Activated CD4-positive, alpha-beta T cell treated with anti-CD3 and anti-CD28 coated beads, Interleukin-2, amount 10 ng/mL, durations not matched to agents 24 days and 14 days (primary cell): ENCODE measurements at regions of chr10 and their contacts with region 1.

Region 1: DNA sequence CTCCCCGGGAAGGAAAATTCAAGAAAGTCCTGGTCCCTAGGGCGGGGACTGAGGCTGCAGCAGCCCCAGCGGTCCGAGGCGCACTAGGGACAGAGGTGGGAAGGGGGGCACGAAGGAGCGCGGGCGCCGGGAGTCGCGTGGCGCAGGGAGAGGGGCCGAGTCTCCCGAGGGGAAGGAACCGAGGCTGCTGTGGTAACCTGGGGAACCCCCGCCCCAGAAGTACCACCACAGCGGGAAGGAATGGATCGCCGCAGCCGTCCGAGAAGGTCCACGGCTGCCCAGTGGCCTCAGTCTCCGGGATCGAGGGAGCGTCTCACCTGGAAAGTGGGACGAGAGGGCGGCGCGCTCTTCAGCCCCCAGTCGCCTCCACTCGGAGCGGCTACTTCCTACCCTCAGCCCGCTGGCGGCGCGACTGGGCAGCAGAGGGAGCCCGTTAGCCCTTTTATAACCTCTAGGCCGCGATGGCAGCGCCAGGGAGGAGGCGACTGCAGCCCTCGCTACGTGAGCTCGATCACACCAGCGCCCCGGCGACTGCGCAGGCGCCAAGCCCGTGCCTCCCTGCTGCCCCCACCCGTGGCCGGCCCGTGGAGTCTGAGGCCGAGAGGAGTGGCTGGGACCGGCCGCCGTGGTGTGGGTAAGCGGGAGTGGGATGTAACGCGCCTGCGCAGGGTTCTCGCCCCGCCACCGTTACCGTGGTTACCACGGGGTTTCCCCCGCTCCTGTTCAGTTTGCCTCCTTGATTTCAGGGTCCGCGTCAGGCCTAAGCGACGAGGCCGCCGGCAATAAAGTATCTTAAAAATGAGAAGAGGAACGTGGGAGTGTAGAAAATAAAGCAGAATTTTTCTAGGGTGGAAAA is at the start of gene P4HA1:
- DNase-seq: peak; percentile 99
- H3K4me3 Mint-ChIP-seq: peak within 1 kb of the TSS; percentile 93
- H3K27ac Mint-ChIP-seq: peak within 1 kb of the TSS; percentile 99
- H3K4me1 Mint-ChIP-seq: peaks cover 30% of the 10 kb centered on the region
- H3K27me3 Mint-ChIP-seq: no peaks in the 10 kb centered on the region
- total RNA-seq, gene P4HA1: 69.4 and 71.1 TPM in 2 replicates

Region 2: GRCh38 chr10:73060738-73061635 is 35.7 kb before region 1 on chr10:
- intact Hi-C with region 1: loop called (anchors 2 kb)
- DNase-seq: no peak
- H3K4me3 Mint-ChIP-seq: no peak overlapping the region
- H3K27ac Mint-ChIP-seq: peak overlapping the region; percentile 80
- H3K4me1 Mint-ChIP-seq: peaks cover 21% of the 10 kb centered on the region
- H3K27me3 Mint-ChIP-seq: no peaks in the 10 kb centered on the region

Region 3: DNA sequence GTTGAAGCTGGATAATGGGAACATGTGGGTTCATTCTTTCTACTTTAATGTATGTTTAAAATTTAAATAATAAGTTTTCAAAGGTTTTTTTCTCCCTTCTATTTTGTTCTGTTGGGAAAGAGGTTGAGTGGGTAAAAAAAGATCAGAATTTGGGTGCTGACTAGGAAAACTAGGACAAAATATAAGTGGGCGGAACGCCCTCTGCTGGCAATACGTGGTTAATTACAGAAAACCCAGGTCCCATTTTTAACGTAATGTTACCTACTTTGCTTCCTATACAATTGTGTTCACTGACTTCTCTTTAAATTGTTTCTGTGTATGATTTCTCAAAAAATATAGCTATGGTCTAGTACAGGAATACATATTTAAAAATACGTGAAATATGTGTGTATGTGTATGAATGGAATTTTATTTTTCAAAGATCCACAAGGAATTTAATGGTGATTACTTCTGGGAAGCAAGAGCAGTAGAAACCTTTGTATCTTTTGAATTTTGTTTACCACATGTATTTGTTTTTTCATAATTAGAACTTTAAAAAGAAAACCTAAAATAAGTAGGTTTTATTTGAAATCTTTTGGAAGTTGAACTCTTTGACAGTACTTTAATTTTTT is 62.5 kb after region 1 on chr10:
- intact Hi-C with region 1: loop called (anchors 1 kb)
- DNase-seq: peak; percentile 85
- H3K4me3 Mint-ChIP-seq: no peak overlapping the region
- H3K27ac Mint-ChIP-seq: no peak overlapping the region
- H3K4me1 Mint-ChIP-seq: peaks cover 33% of the 10 kb centered on the region
- H3K27me3 Mint-ChIP-seq: no peaks in the 10 kb centered on the region

Region 4: GRCh38 chr10:73246783-73247508 is 150.3 kb after region 1 on chr10 and contains the start of gene DNAJC9:
- intact Hi-C with region 1: loop called (anchors 1 kb)
- DNase-seq: peak; percentile 99
- H3K4me3 Mint-ChIP-seq: peak within 1 kb of the TSS; percentile 98
- H3K27ac Mint-ChIP-seq: peak within 1 kb of the TSS; percentile 97
- H3K4me1 Mint-ChIP-seq: peaks cover 55% of the 10 kb centered on the region
- H3K27me3 Mint-ChIP-seq: no peaks in the 10 kb centered on the region
- total RNA-seq, gene DNAJC9: 54.2 and 56.6 TPM in 2 replicates

Region 5: GRCh38 chr10:73287441-73287840 is 190.8 kb after region 1 on chr10:
- intact Hi-C with region 1: no loop called
- DNase-seq: no peak
- H3K4me3 Mint-ChIP-seq: no peak overlapping the region
- H3K27ac Mint-ChIP-seq: no peak overlapping the region
- H3K4me1 Mint-ChIP-seq: no peaks in the 10 kb centered on the region
- H3K27me3 Mint-ChIP-seq: peaks cover 9% of the 10 kb centered on the region